AG04449 (cell line): ENCODE measurements at regions of chrX and their contacts with region 1.

Region 1: GRCh38 chrX:76279000-76279399 is 106.1 kb downstream of the PBDC1 start:
- DNase-seq: peak; percentile 7
- H3K4me3 ChIP-seq: no peak overlapping the region
- CTCF ChIP-seq: peak; percentile 47

Region 2: DNA sequence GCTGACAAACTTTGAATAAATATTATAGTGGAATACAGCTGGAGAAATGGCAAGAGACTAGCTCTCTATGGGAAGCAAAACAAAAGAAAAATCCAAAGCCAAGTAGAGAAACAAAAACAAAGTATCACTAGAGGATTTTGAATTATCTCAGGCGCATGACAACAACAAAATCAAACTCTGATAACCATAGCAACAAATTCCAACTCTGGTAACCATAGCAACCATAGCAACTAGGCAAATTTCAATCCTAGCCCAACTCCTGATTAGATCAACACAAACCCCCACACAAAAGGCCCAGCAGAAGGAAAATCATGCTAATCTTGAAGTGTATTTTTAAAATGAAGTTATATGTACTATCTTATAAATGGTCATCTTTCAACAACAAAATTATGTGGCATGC is 395.6 kb before region 1 on chrX:
- CTCF ChIA-PET with region 1: no interaction called
- POLR2A ChIA-PET with region 1: no interaction called
- DNase-seq: no peak
- H3K4me3 ChIP-seq: no peak overlapping the region
- CTCF ChIP-seq: no peak

Region 3: GRCh38 chrX:76398461-76398860 is 119.5 kb after region 1 on chrX:
- CTCF ChIA-PET with region 1: no interaction called
- POLR2A ChIA-PET with region 1: no interaction called
- DNase-seq: no peak
- H3K4me3 ChIP-seq: no peak overlapping the region
- CTCF ChIP-seq: no peak

Region 4: DNA sequence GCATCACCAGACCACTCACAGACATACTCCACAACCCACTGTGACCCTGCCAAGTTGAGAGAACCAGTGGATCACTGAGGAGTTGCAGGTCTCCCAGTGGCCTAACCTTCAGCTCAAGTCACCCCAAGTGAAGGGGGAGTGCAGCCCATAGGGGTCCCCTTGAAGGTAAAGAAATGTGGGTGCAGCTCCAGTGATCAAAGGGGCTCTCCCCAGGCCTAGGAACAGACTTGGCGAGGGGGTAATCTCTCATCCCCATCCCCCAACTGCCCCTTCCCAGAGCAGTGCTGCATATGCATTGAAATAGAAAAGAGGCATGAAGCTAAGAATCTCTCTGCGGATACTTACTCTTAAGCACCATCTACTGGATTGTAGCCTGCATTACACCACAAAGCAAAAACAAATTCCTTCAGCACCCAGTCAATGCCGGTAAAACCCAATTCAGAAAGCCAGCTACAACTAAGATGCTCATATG is 175.5 kb after region 1 on chrX:
- CTCF ChIA-PET with region 1: interaction called, 41 read pairs
- POLR2A ChIA-PET with region 1: no interaction called
- DNase-seq: no peak
- H3K4me3 ChIP-seq: no peak overlapping the region
- CTCF ChIP-seq: peak; percentile 38

Region 5: GRCh38 chrX:78029663-78030062 is 1750.7 kb after region 1 on chrX:
- CTCF ChIA-PET with region 1: interaction called, 13 read pairs
- POLR2A ChIA-PET with region 1: no interaction called
- DNase-seq: no peak
- H3K4me3 ChIP-seq: no peak overlapping the region
- CTCF ChIP-seq: peak; percentile 27